ENCODE measurements at regions of chr4 and their contacts with region 1.

Region 1: GRCh38 chr4:122758033-122758432 is 25.5 kb downstream of the BBS12 start:
- DNase-seq: no peak

Region 2: GRCh38 chr4:122914292-122914904 is 156.4 kb after region 1 on chr4:
- intact Hi-C with region 1: loop called (anchors 2 kb)
- DNase-seq: no peak

Measured in cardiac septum (tissue), 1 donor.